Heart left ventricle (tissue), 16 donors: ENCODE measurements at regions of chr19 and their contacts with region 1.

Region 1: GRCh38 chr19:6632002-6632621 is 37.8 kb downstream of the TNFSF14 start:
- DNase-seq: peak in 4 of 5 donors; percentile 41 to 74 (median 52)
- ATAC-seq: peak in 2 of 4 donors; percentile 53 to 76
- H3K4me3 ChIP-seq: no peak overlapping the region
- H3K27ac ChIP-seq: no peak overlapping the region
- H3K4me1 ChIP-seq: no peaks in the 10 kb centered on the region
- H3K27me3 ChIP-seq: peaks cover 0 to 33% (median 0%) of the 10 kb centered on the region in 9 donors
- CTCF ChIP-seq: peak; percentile 73 to 92 (median 87)
- POLR2A ChIP-seq: no peak

Region 2: DNA sequence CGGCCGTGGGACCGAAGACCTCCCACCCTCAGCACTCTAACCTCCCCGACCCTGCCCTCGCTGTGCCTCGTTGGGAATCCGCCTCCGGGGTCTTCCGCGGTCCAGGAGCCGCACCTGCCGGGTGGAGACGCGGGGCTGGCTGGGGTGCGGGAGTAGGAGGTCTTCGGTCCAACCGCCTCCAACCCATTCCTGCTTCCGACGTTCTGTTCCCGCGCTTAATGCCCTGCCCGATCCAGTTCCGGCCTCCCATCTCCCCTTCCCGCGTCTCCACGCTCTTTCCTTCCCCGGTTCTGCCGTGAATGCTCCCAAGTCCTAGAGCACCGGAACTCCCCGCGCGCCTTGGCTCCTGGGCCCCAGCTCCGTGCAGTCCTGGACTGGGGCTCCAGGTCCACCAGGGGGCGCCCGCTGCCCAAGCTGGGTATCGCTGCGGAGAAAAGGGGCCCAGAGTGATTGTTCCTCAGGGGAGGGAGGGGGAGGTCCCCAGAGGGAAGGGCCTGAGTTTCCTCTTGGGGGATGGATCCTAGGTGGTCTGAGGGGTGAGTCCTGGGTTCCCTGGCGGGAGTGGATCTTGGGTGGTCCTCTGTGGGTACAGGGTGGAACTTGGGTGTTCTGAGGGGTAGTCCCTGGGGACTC is 115.3 kb before region 1 on chr19:
- intact Hi-C with region 1: loop called (anchors 1 to 5 kb)
- DNase-seq: peak; percentile 85 to 96 (median 89)
- ATAC-seq: peak; percentile 90 to 93 (median 92)
- H3K4me3 ChIP-seq: peak overlapping the region; percentile 45 to 71 (median 58)
- H3K27ac ChIP-seq: peak overlapping the region in 10 of 12 donors; percentile 11 to 78 (median 56)
- H3K4me1 ChIP-seq: peaks cover 0 to 21% (median 6%) of the 10 kb centered on the region in 12 donors
- H3K27me3 ChIP-seq: peaks cover 0 to 11% (median 0%) of the 10 kb centered on the region in 9 donors
- CTCF ChIP-seq: peak; percentile 88 to 97 (median 95)
- POLR2A ChIP-seq: no peak

Region 3: DNA sequence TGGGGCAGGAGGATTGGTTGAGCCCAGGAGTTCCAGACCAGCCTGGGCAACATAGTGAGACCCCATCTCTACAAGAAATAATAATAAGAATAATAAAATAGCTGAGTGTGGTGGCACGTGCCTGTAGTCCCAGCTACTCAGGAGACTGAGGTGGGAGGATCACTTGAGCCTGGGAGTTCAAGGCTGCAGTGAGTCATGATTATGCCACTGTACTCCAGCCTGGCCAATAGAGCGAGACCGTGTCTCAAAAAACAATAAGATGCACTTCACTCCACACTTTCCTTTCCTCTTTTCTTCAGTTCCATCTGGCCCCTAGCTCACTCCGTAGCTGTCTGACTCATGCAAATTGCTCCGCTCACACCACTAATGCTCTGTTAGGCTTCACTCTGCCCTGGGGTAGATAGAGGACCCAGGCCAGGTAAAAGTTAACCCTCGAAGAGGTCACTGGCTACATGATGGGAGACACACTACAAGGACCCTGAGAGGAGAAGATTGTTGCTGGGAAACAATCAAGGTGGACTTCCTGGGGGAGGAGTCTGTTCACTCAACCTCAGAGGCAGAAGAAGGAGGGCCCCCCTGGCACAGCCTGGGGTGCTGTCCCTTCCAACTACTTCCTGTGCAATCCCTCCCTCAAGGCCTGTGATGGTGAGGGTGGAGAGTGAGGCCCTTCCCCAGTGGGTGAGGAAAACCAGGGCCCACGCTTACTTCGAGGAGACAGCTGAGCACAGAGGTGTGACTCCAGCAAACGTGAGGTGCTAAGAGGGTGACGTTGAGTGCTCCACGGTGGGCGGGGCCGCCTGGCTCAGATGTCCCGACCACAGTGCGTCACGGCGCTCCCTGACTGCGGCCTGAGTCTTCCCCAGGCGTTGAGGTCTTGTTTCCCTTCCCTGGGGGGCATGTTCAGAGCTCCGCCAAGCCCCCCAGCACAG is 110.1 kb before region 1 on chr19:
- intact Hi-C with region 1: loop called (anchors 1 to 5 kb)
- DNase-seq: no peak
- ATAC-seq: peak in 1 of 4 donors; percentile 48
- H3K4me3 ChIP-seq: no peak overlapping the region
- H3K27ac ChIP-seq: no peak overlapping the region
- H3K4me1 ChIP-seq: peaks cover 0 to 20% (median 5%) of the 10 kb centered on the region in 12 donors
- H3K27me3 ChIP-seq: peaks cover 0 to 25% (median 0%) of the 10 kb centered on the region in 9 donors
- CTCF ChIP-seq: no peak
- POLR2A ChIP-seq: no peak

Region 4: DNA sequence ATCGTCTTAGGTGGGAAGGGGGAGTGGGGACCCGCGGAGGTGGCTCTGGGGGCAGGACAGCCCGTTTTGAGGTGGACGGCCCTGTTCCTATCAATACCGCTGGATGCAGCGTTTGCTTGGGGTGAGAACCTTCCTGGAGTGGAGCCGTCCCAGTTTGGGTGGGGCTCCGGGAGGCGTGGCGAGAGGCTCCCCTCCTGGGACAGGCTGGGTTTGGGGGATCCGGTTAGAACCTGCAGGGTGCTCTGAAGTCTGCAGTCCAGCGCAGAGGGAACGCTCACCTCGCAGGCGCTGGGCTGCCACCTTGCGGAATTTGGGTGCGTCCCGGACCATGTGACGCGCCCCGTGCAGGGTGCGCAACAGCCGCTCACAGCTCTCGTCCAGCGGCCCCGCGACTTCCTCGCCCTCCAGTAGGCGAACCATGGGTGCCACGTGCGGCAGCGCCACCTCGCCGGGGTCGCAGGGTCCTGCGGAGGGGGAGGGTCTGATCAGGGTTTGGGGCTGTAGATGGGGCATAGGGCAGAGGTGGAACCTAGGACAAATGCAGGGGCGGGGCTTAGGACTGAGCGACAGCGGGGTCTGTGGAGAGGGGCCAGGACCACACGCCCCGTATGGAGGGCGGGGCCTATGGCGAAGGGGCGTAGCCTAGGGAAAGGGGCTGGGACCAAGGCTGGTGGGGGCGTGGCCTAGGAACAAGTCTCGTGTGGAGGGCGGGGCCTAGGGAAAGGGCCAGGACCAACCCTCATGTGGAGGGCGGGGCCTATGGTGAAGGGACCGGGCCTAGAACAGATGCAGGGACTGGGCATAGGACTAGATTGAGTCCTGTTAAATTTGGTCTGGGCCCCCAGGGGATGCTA is 121.3 kb after region 1 on chr19:
- intact Hi-C with region 1: loop called in 2 of 10 experiments (anchors 5 to 10 kb)
- DNase-seq: peak; percentile 67 to 90 (median 81)
- ATAC-seq: peak; percentile 79 to 90 (median 85)
- H3K4me3 ChIP-seq: peak overlapping the region in 10 of 12 donors; percentile 39 to 56 (median 48)
- H3K27ac ChIP-seq: peak overlapping the region in 8 of 12 donors; percentile 9 to 72 (median 48)
- H3K4me1 ChIP-seq: peaks cover 0 to 16% (median 8%) of the 10 kb centered on the region in 12 donors
- H3K27me3 ChIP-seq: no peaks in the 10 kb centered on the region
- CTCF ChIP-seq: peak; percentile 29 to 64 (median 49)
- POLR2A ChIP-seq: no peak

Region 5: DNA sequence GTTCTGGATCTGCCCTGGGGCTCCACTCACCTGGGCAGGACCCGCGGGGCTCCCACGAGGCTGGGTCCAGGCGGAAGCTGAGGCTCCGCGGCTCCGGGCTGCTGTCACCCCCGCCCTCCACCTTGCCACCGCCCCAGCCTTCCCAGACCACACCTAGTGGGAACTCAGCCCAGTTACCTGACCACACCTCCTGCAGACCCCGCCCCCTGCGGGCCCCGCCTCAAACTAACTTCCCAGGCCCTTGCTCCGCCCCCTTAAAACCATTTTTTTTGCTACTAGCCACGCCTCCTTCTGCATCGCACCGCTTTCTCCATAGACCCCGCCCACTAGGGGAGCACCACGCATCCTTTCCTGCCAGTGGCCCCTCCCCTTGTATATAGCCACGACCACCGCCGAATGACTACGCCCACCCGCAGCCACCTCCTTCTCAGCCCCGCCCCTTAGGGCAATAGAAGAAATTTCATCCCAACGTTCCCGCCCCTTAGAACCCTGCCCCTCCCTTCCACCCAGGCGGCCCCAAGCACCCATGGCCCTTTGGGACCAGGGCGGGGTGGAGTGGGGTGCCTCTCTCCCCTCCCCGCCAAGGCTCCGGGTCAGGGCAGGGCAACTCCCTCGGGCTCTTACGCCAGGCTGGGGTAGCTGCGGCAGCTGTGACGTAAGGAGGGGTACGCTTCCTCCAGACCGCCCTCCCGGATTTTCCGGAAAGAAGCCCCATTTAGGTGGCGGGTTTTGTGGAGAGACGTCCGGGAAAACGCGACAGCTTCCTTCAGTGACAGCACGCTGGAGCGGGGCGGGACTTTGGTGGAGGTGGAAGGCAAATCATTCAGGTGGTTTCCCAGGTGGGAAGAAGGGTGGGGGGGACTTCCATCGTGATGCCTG is 135.5 kb after region 1 on chr19 and contains the start of gene SH2D3A:
- intact Hi-C with region 1: loop called in 2 of 10 experiments (anchors 5 to 10 kb)
- DNase-seq: peak; percentile 42 to 84 (median 64)
- ATAC-seq: peak; percentile 27 to 77 (median 74)
- H3K4me3 ChIP-seq: peak within 1 kb of the TSS in 9 of 12 donors; percentile 15 to 54 (median 41)
- H3K27ac ChIP-seq: peak within 1 kb of the TSS in 4 of 12 donors; percentile 39 to 72 (median 58)
- H3K4me1 ChIP-seq: peaks cover 0 to 26% (median 10%) of the 10 kb centered on the region in 12 donors
- H3K27me3 ChIP-seq: peaks cover 9 to 32% (median 12%) of the 10 kb centered on the region in 9 donors
- CTCF ChIP-seq: no peak
- POLR2A ChIP-seq: no peak
- total RNA-seq, gene SH2D3A: 0.12 to 0.56 (median 0.52) TPM in 3 of 9 donors, not detected in the others

Region 6: GRCh38 chr19:6862673-6863078 is 230.6 kb after region 1 on chr19:
- intact Hi-C with region 1: loop called (anchors 2 to 5 kb)
- DNase-seq: peak; percentile 68 to 89 (median 80)
- ATAC-seq: peak; percentile 69 to 96 (median 90)
- H3K4me3 ChIP-seq: peak overlapping the region in 10 of 12 donors; percentile 8 to 53 (median 34)
- H3K27ac ChIP-seq: peak overlapping the region in 1 of 12 donors; percentile 60
- H3K4me1 ChIP-seq: peaks cover 0 to 9% (median 5%) of the 10 kb centered on the region in 12 donors
- H3K27me3 ChIP-seq: peaks cover 0 to 23% (median 0%) of the 10 kb centered on the region in 9 donors
- CTCF ChIP-seq: peak; percentile 67 to 86 (median 80)
- POLR2A ChIP-seq: no peak